ENCODE measurements at regions of chr18 and their contacts with region 1.

Region 1: GRCh38 chr18:37341016-37341415 is 224.6 kb downstream of the CELF4 start:
- DNase-seq: no peak
- ATAC-seq: no peak
- H3K4me3 ChIP-seq: no peak overlapping the region
- H3K27ac ChIP-seq: no peak overlapping the region
- H3K4me1 ChIP-seq: no peaks in the 10 kb centered on the region
- H3K27me3 ChIP-seq: peaks cover 0 to 9% of the 10 kb centered on the region in 2 experiments; a peak in 1 of 5 replicates
- CTCF ChIP-seq: no peak
- EP300 ChIP-seq: no peak
- POLR2A ChIP-seq: no peak
- RAD21 ChIP-seq: no peak

Region 2: GRCh38 chr18:37253394-37254235 is 87.4 kb before region 1 on chr18:
- CTCF ChIA-PET with region 1: no interaction called
- POLR2A ChIA-PET with region 1: no interaction called
- in situ Hi-C with region 1: no loop called
- intact Hi-C with region 1: loop called (anchors 1 kb)
- DNase-seq: no peak
- ATAC-seq: peak; percentile 69
- H3K4me3 ChIP-seq: peak overlapping the region in 2 of 3 experiments; percentile 43 to 67; a peak in 3 of 6 replicates
- H3K27ac ChIP-seq: no peak overlapping the region
- H3K4me1 ChIP-seq: peaks cover 8% of the 10 kb centered on the region
- H3K27me3 ChIP-seq: peaks cover 1 to 48% of the 10 kb centered on the region in 2 experiments; a peak in 4 of 5 replicates
- CTCF ChIP-seq: no peak
- EP300 ChIP-seq: no peak
- POLR2A ChIP-seq: no peak
- RAD21 ChIP-seq: no peak

Region 3: DNA sequence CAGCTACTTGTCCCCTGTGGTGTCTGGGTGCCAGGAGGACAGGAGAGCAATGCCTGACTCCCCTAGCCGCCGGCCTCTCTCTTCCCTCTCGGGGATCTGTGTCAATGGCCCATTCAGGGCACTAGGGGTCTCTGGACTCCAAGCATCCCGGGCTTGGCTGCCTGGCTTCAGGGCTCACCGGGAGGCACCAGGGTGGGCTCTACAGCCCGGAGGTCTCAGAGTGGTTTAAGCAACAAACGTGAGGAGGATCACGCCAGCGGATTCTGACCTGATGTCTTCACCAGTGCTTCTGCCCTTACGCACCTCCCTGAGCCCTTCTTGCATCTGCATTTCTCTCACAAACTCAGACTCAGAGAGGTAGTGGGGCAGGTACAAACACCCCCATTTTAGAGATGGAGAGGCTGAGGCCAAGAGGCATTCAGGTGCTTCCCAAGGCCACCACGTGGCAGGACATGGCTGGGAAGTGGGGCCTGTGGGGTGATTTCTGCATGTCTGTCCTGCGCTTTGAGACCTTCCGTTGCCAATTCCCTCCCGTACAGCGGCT is 18.5 kb before region 1 on chr18:
- CTCF ChIA-PET with region 1: no interaction called
- POLR2A ChIA-PET with region 1: no interaction called
- in situ Hi-C with region 1: no loop called
- intact Hi-C with region 1: no loop called
- DNase-seq: peak; percentile 31
- ATAC-seq: peak; percentile 92
- H3K4me3 ChIP-seq: no peak overlapping the region
- H3K27ac ChIP-seq: no peak overlapping the region
- H3K4me1 ChIP-seq: no peaks in the 10 kb centered on the region
- H3K27me3 ChIP-seq: peaks cover 3 to 35% of the 10 kb centered on the region in 2 experiments; a peak in 4 of 5 replicates
- CTCF ChIP-seq: peak; percentile 92
- EP300 ChIP-seq: no peak
- POLR2A ChIP-seq: no peak
- RAD21 ChIP-seq: peak; percentile 59; the same call in 1 of the 2 replicates

Region 4: DNA sequence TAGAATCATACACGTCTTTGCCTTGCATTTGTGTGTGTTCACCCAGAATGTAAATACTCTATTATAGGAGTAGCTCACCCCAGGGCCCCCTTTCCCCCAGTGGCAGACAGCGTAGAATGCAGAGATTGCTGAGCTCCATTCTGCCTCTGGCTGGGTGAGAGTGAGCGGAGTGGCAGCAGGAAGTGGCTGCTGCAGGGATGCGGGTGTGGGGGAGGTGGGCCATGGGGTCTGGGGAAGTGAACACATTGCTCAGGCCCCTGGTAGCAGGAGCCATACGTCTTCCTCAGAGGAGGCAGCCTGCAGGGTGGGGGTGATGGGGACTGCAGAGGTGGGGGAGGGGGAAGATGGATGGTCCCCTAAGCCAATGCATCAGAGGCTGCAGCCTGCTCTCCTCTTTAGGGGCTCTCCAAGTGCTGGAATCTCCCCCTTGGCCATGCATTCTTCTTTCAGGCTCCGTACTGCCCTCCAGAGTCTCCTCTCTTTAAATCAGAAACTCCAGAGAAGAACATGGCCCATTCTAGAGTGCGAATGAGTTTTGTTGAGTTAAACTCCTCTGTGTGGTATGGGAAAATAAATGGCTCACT is 152.4 kb after region 1 on chr18:
- CTCF ChIA-PET with region 1: no interaction called
- POLR2A ChIA-PET with region 1: no interaction called
- in situ Hi-C with region 1: no loop called
- intact Hi-C with region 1: no loop called
- DNase-seq: no peak
- ATAC-seq: no peak
- H3K4me3 ChIP-seq: no peak overlapping the region
- H3K27ac ChIP-seq: no peak overlapping the region
- H3K4me1 ChIP-seq: no peaks in the 10 kb centered on the region
- H3K27me3 ChIP-seq: peaks cover 1 to 38% of the 10 kb centered on the region in 2 experiments; a peak in 4 of 5 replicates
- CTCF ChIP-seq: no peak
- EP300 ChIP-seq: no peak
- POLR2A ChIP-seq: no peak
- RAD21 ChIP-seq: no peak